Right lobe of liver (tissue), 6 donors: ENCODE measurements at regions of chr9 and their contacts with region 1.

Region 1: DNA sequence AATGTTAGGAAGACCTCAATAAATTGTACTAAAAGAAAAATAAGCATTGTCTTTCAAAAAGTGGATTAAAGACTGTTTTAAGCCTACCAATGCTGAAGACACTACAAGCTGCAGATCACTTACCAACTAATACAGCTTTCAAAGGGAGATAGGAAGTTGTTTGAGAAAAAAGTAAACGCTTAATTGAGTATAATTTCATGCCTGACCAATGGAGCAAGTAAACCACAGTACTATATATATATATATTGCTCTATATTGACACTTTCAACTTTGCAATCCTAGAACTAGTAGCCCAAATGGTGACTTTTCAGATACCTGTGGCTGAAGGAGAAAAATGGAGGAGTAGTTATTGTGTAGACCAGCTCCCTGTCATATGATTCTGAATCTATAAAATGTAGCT is 85.7 kb downstream of the FREM1 start:
- DNase-seq: no peak
- ATAC-seq: no peak
- H3K4me3 ChIP-seq: no peak overlapping the region
- H3K27ac ChIP-seq: no peak overlapping the region
- H3K4me1 ChIP-seq: no peaks in the 10 kb centered on the region
- H3K27me3 ChIP-seq: no peaks in the 10 kb centered on the region
- CTCF ChIP-seq: no peak
- POLR2A ChIP-seq: no peak

Region 2: DNA sequence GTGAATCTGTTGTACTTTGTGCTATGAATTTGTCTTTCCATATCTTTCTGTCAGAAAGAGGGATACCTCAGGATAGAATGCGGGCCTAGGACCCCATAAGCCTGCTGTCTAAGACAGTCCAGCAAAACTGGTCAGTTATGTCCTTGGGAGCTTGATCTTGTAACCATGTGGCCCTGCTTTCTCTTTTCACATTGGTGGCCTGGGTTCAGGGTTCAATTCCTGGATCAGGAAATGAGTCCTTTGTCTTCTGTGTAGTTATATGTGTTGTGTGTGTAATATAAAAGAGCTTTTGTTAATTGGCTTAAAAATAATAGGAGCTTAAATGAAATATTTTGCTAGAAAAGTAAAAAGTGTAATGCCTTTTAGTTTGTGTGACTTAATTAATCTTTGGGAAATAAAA is 68.8 kb after region 1 on chr9:
- intact Hi-C with region 1: loop called in 1 of 2 experiments (anchors 2 kb)
- DNase-seq: no peak
- ATAC-seq: no peak
- H3K4me3 ChIP-seq: no peak overlapping the region
- H3K27ac ChIP-seq: no peak overlapping the region
- H3K4me1 ChIP-seq: no peaks in the 10 kb centered on the region
- H3K27me3 ChIP-seq: no peaks in the 10 kb centered on the region
- CTCF ChIP-seq: no peak
- POLR2A ChIP-seq: no peak